ENCODE measurements at regions of chr12 and their contacts with region 1.

Region 1: DNA sequence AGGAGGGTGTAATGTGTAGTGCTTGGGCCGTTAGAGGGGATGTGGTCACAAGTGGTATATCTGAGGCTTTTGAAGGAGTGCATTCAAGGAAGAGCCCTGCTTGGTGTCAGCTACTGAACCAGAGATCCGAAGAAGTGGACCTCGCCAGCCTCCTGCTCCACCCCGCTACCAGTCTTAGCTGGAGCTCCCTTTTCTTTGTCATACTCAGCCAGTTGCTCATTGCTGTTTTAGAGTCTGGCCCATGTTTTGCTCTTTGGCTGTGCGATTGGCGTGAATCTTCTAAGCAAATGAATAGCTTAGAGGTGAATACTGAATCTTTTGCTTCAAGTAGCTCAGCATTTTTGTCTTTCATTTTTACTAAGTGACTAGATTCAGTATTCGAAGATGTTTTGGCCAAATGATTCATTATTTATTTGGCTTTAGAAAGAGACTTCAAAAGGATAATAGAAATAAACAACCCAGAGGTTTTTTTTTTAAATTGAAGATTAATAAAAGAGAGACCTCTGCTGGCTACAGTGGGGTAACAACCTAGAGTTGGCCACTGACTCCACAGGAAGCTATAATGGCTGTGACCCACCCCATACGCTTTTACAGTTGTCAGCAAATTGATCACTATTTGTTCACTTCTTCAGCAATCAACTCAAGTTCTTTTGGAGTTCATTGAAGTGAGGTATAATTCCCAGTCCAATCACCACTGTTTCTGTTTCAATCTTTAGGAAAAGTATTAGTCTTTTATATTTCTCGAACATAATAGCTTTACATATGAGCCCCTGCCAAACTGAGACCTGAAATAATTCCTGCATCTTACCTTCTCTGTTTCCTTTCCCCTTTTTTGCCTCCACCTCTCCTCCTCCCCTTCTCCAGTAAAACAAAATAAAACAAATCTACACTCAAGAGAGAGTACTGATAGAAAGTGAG is 19.9 kb downstream of the CDKN1B start:
- DNase-seq: peak; percentile 90
- ATAC-seq: peak; percentile 90
- H3K4me3 Mint-ChIP-seq: peak overlapping the region; percentile 67
- H3K27ac Mint-ChIP-seq: peak overlapping the region; percentile 98
- H3K4me1 Mint-ChIP-seq: peaks cover 65% of the 10 kb centered on the region
- H3K27me3 Mint-ChIP-seq: no peaks in the 10 kb centered on the region

Region 2: GRCh38 chr12:12505544-12506495 is 231.2 kb before region 1 on chr12:
- CTCF ChIA-PET with region 1: interaction called, 11 read pairs
- DNase-seq: no peak
- ATAC-seq: peak; percentile 75
- H3K4me3 Mint-ChIP-seq: peak overlapping the region; percentile 17
- H3K27ac Mint-ChIP-seq: peak overlapping the region; percentile 67
- H3K4me1 Mint-ChIP-seq: peaks cover 51% of the 10 kb centered on the region
- H3K27me3 Mint-ChIP-seq: no peaks in the 10 kb centered on the region

Region 3: GRCh38 chr12:12645485-12645884 is 91.5 kb before region 1 on chr12:
- CTCF ChIA-PET with region 1: interaction called, 22 read pairs
- DNase-seq: peak; percentile 53
- ATAC-seq: peak; percentile 79
- H3K4me3 Mint-ChIP-seq: peak overlapping the region; percentile 17
- H3K27ac Mint-ChIP-seq: peak overlapping the region; percentile 80
- H3K4me1 Mint-ChIP-seq: peaks cover 16% of the 10 kb centered on the region
- H3K27me3 Mint-ChIP-seq: no peaks in the 10 kb centered on the region

Region 4: DNA sequence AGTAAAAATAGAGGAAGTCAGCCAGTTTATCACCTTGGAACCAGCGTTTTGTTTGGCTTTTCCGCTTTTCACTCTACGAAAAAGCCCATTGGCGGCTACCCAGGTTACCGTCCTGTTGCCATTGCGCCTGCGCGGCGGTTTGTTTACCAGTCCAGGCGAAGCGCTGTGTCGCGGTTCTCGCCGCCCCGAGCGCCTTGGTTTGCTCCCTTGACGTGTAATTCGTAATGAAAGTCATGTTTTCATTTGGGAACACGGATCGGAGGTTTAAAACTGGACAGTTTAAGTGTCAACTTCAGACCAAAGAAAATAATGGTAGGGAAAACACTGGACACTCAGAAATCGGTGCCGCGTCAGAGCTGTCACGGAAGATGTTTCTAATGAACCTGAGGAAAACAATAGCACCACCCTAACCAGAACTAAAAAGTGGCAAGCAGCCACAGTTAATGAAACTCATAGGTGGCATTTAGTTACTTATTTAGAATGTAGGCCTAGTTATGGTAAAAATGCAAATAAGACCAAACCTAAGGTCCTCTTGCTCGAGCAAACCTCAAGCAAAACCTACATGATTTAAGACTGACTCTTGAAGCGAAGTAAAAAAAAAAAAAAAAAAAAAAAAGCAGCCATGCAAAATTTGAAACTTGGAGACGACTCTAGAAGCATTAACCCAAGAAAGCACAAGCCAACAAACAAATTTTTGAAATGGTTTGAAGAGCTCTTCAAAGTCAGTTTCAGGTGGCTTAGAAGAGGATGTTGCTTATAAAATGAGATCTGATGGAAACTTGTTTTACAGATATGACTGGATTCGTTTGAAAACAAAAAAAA is 40.2 kb before region 1 on chr12:
- CTCF ChIA-PET with region 1: interaction called, 14 read pairs
- DNase-seq: peak; percentile 96
- ATAC-seq: peak; percentile 84
- H3K4me3 Mint-ChIP-seq: peak overlapping the region; percentile 81
- H3K27ac Mint-ChIP-seq: peak overlapping the region; percentile 100
- H3K4me1 Mint-ChIP-seq: peaks cover 60% of the 10 kb centered on the region
- H3K27me3 Mint-ChIP-seq: no peaks in the 10 kb centered on the region

Region 5: GRCh38 chr12:12716793-12717585 is 20.0 kb before region 1 on chr12 and contains the start of gene CDKN1B:
- CTCF ChIA-PET with region 1: interaction called, 71 read pairs
- DNase-seq: peak; percentile 94
- ATAC-seq: peak; percentile 69
- H3K4me3 Mint-ChIP-seq: peak within 1 kb of the TSS; percentile 96
- H3K27ac Mint-ChIP-seq: peak within 1 kb of the TSS; percentile 100
- H3K4me1 Mint-ChIP-seq: peaks cover 41% of the 10 kb centered on the region
- H3K27me3 Mint-ChIP-seq: no peaks in the 10 kb centered on the region
- total RNA-seq, gene CDKN1B: 99.2 to 105 TPM

Region 6: DNA sequence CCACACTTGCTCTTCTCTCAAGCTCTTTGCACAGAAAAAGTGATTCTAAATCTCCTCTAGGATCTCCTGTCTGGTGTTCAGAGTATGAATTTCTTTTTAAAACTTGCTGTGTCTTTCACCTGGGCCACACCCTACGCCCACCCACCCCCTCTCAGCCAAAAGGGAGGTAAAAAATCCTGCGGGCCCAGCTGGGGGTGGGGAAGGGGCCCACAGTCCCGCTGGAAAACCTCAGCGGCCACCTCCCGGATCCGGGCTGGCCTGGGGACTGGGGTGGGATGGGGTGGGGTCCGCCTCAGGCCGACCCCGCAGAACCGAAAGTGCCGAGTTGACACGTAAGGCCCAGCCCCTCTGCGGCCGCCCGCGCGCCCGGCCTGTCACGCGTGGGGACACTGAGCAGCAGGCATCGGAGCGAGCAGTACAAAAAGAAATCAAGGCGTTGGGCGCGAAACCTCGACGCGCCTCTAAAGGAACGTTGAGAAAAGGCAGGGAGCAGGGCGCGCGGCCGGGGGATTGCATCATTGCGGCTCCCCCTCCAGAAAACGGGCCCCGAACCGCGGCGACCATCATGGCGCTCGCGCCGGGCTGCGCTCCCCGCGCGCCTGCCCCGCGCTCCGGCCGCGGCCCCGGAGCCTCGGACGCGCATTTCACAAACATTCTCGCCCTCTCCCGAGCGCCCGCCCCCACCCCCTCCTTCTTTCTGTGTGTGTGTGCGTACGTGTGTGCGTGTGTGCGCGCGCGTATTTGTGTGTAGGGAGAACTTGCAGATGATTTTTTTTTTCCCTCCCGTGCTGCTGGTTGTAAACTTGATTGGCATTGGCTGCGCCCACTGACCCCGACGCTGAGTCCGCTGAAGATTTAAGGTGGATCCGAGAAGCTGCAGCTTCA is 12.1 kb before region 1 on chr12:
- CTCF ChIA-PET with region 1: interaction called, 71 read pairs
- DNase-seq: peak; percentile 95
- ATAC-seq: peak; percentile 65
- H3K4me3 Mint-ChIP-seq: peak overlapping the region; percentile 96
- H3K27ac Mint-ChIP-seq: peak overlapping the region; percentile 96
- H3K4me1 Mint-ChIP-seq: peaks cover 37% of the 10 kb centered on the region
- H3K27me3 Mint-ChIP-seq: no peaks in the 10 kb centered on the region

Region 7: GRCh38 chr12:12786716-12787601 is 49.9 kb after region 1 on chr12:
- CTCF ChIA-PET with region 1: interaction called, 14 read pairs
- DNase-seq: peak; percentile 76
- ATAC-seq: peak; percentile 96
- H3K4me3 Mint-ChIP-seq: peak overlapping the region; percentile 78
- H3K27ac Mint-ChIP-seq: peak overlapping the region; percentile 75
- H3K4me1 Mint-ChIP-seq: peaks cover 42% of the 10 kb centered on the region
- H3K27me3 Mint-ChIP-seq: no peaks in the 10 kb centered on the region

Region 8: GRCh38 chr12:12859690-12860089 is 122.7 kb after region 1 on chr12:
- CTCF ChIA-PET with region 1: no interaction called
- DNase-seq: no peak
- ATAC-seq: no peak
- H3K4me3 Mint-ChIP-seq: no peak overlapping the region
- H3K27ac Mint-ChIP-seq: no peak overlapping the region
- H3K4me1 Mint-ChIP-seq: no peaks in the 10 kb centered on the region
- H3K27me3 Mint-ChIP-seq: no peaks in the 10 kb centered on the region

Measured in activated CD8-positive, alpha-beta memory T cell treated with anti-CD3 and anti-CD28 coated beads, Interleukin-2, amount 10 ng/mL, durations not matched to agents 7 days and 5 days (primary cell).